T-cell (primary cell): ENCODE measurements at regions of chr5 and their contacts with region 1.

Region 1: DNA sequence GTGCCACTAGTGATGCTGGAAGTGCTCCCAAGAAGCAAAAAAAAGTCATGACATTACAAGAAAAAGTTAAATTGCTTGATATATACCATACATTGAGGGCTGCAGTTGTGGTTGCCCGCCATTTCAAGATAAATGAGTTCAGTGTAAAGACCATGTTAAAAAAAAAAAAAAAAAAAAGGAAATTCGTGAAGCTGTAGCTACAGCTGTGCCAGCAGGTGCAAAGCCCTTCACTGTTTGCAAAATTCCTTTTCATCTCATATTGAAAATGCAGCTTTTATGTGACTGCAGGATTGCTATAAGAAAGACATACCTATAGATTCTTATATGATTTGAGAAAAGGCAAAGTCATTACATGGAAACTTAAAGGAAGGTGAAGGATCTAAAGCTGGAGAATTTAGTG is 179.6 kb upstream of the POU5F2 start:
- DNase-seq: no peak
- ATAC-seq: no peak
- H3K4me3 ChIP-seq: no peak overlapping the region
- H3K4me3 Mint-ChIP-seq: no peak overlapping the region
- H3K27ac ChIP-seq: no peak overlapping the region
- H3K27ac Mint-ChIP-seq: no peak overlapping the region
- H3K4me1 ChIP-seq: no peaks in the 10 kb centered on the region
- H3K4me1 Mint-ChIP-seq: peaks cover 0 to 2% (median 0%) of the 10 kb centered on the region in 3 donors
- H3K27me3 ChIP-seq: no peaks in the 10 kb centered on the region
- H3K27me3 Mint-ChIP-seq: no peaks in the 10 kb centered on the region

Region 2: GRCh38 chr5:93886098-93886796 is 34.8 kb before region 1 on chr5:
- CTCF ChIA-PET with region 1: interaction called in 1 of 2 experiments, 11 read pairs
- POLR2A ChIA-PET with region 1: no interaction called
- DNase-seq: no peak
- ATAC-seq: no peak
- H3K4me3 ChIP-seq: no peak overlapping the region
- H3K4me3 Mint-ChIP-seq: no peak overlapping the region
- H3K27ac ChIP-seq: no peak overlapping the region
- H3K27ac Mint-ChIP-seq: no peak overlapping the region
- H3K4me1 ChIP-seq: no peaks in the 10 kb centered on the region
- H3K4me1 Mint-ChIP-seq: peaks cover 22 to 29% (median 26%) of the 10 kb centered on the region in 3 donors
- H3K27me3 ChIP-seq: no peaks in the 10 kb centered on the region
- H3K27me3 Mint-ChIP-seq: no peaks in the 10 kb centered on the region

Region 3: GRCh38 chr5:95565280-95565920 is 1644.4 kb after region 1 on chr5:
- CTCF ChIA-PET with region 1: no interaction called
- POLR2A ChIA-PET with region 1: interaction called in 1 of 2 experiments, 10 read pairs
- DNase-seq: no peak
- ATAC-seq: no peak
- H3K4me3 ChIP-seq: no peak overlapping the region
- H3K4me3 Mint-ChIP-seq: no peak overlapping the region
- H3K27ac ChIP-seq: no peak overlapping the region
- H3K27ac Mint-ChIP-seq: no peak overlapping the region
- H3K4me1 ChIP-seq: no peaks in the 10 kb centered on the region
- H3K4me1 Mint-ChIP-seq: peaks cover 11 to 18% (median 15%) of the 10 kb centered on the region in 3 donors
- H3K27me3 ChIP-seq: no peaks in the 10 kb centered on the region
- H3K27me3 Mint-ChIP-seq: no peaks in the 10 kb centered on the region